ENCODE measurements at regions of chr16 and their contacts with region 1.

Region 1: GRCh38 chr16:22190776-22191531 is 15.1 kb upstream of the EEF2K start:
- DNase-seq: peak; percentile 93
- ATAC-seq: peak; percentile 60
- H3K4me3 Mint-ChIP-seq: peak overlapping the region; percentile 98
- H3K27ac Mint-ChIP-seq: peak overlapping the region; percentile 100
- H3K4me1 Mint-ChIP-seq: peaks cover 50% of the 10 kb centered on the region
- H3K27me3 Mint-ChIP-seq: peaks cover 2% of the 10 kb centered on the region

Region 2: GRCh38 chr16:21952793-21953540 is 238.0 kb before region 1 on chr16 and contains the start of gene UQCRC2:
- POLR2A ChIA-PET with region 1: interaction called, 14 read pairs
- DNase-seq: peak; percentile 83
- ATAC-seq: peak; percentile 92
- H3K4me3 Mint-ChIP-seq: peak within 1 kb of the TSS; percentile 96
- H3K27ac Mint-ChIP-seq: peak within 1 kb of the TSS; percentile 92
- H3K4me1 Mint-ChIP-seq: peaks cover 35% of the 10 kb centered on the region
- H3K27me3 Mint-ChIP-seq: no peaks in the 10 kb centered on the region
- total RNA-seq, gene UQCRC2: 216 to 221 TPM

Region 3: DNA sequence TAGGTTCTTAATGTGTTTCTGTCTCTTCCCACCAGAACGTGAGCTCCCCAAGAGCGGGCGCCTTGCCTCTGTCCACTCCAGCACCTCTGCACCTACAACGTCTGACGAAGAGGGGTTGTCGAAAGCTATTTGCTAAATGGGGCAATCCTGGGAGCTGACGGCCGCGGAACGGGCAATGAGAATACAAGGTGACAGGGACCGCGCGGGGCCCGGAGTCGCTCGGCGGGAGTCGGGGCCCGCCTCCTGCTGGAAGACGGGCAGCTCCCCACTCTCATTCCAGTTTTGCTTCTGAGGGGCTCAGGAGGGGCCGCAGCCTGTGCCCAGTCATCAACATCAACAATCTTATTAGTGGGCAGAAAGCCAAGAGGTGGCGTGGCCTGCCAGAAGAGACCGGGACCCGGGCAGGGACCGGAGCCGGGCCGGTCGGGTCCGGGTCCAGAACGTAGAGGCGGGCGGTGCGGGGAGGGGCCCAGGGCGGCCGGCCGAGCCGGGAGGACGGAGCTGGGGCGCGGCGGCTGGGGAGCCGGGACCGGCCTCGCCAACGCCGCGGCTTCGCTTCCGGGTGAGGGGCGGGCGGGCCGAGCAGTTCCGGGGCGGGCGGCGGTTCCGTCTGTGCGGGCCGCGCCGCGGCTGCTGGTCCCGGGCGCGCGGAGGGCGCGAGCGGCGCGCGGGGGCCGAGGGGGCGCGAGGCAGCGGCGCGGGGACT is 183.3 kb before region 1 on chr16 and contains the start of gene MOSMO:
- POLR2A ChIA-PET with region 1: interaction called, 10 read pairs
- DNase-seq: peak; percentile 80
- ATAC-seq: peak; percentile 92
- H3K4me3 Mint-ChIP-seq: peak within 1 kb of the TSS; percentile 88
- H3K27ac Mint-ChIP-seq: peak within 1 kb of the TSS; percentile 88
- H3K4me1 Mint-ChIP-seq: peaks cover 21% of the 10 kb centered on the region
- H3K27me3 Mint-ChIP-seq: no peaks in the 10 kb centered on the region
- total RNA-seq, gene MOSMO: 11.6 to 14.7 TPM

Region 4: DNA sequence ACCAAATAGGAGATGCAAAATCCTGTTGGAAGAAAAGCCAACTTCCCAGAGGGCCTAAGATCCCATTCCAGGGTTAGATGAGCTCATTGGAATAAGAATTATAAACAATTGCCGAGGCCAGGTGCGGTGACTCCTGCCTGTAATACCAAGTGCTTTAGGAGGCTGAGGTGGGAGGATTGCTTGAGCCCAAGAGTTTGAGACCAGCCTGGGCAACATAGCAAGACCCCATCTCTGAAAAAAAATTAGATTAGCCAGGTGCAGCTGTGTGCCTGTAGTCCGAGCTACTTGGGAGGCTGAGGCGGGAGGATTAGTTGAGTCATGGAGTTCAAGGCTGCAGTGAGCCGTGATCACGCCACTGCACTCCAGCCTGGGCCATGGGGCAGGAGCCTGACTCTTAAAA is 46.4 kb before region 1 on chr16:
- POLR2A ChIA-PET with region 1: no interaction called
- DNase-seq: no peak
- ATAC-seq: no peak
- H3K4me3 Mint-ChIP-seq: no peak overlapping the region
- H3K27ac Mint-ChIP-seq: no peak overlapping the region
- H3K4me1 Mint-ChIP-seq: no peaks in the 10 kb centered on the region
- H3K27me3 Mint-ChIP-seq: peaks cover 6% of the 10 kb centered on the region

Region 5: GRCh38 chr16:22206013-22206841 is 15.3 kb after region 1 on chr16 and contains the start of gene EEF2K:
- POLR2A ChIA-PET with region 1: interaction called, 15 read pairs
- DNase-seq: peak; percentile 87
- ATAC-seq: peak; percentile 92
- H3K4me3 Mint-ChIP-seq: peak within 1 kb of the TSS; percentile 98
- H3K27ac Mint-ChIP-seq: peak within 1 kb of the TSS; percentile 84
- H3K4me1 Mint-ChIP-seq: peaks cover 31% of the 10 kb centered on the region
- H3K27me3 Mint-ChIP-seq: no peaks in the 10 kb centered on the region
- total RNA-seq, gene EEF2K: 25.7 to 26.1 TPM

Region 6: GRCh38 chr16:22217889-22218730 is 27.2 kb after region 1 on chr16:
- POLR2A ChIA-PET with region 1: no interaction called
- DNase-seq: no peak
- ATAC-seq: peak; percentile 30
- H3K4me3 Mint-ChIP-seq: no peak overlapping the region
- H3K27ac Mint-ChIP-seq: no peak overlapping the region
- H3K4me1 Mint-ChIP-seq: peaks cover 16% of the 10 kb centered on the region
- H3K27me3 Mint-ChIP-seq: peaks cover 1% of the 10 kb centered on the region

Region 7: GRCh38 chr16:22232277-22233042 is 41.5 kb after region 1 on chr16:
- POLR2A ChIA-PET with region 1: no interaction called
- DNase-seq: no peak
- ATAC-seq: peak; percentile 52
- H3K4me3 Mint-ChIP-seq: no peak overlapping the region
- H3K27ac Mint-ChIP-seq: no peak overlapping the region
- H3K4me1 Mint-ChIP-seq: peaks cover 6% of the 10 kb centered on the region
- H3K27me3 Mint-ChIP-seq: no peaks in the 10 kb centered on the region

Region 8: GRCh38 chr16:22297114-22297878 is 106.3 kb after region 1 on chr16 and contains the start of gene POLR3E:
- POLR2A ChIA-PET with region 1: interaction called, 27 read pairs
- DNase-seq: peak; percentile 100
- ATAC-seq: peak; percentile 82
- H3K4me3 Mint-ChIP-seq: peak within 1 kb of the TSS; percentile 93
- H3K27ac Mint-ChIP-seq: peak within 1 kb of the TSS; percentile 95
- H3K4me1 Mint-ChIP-seq: peaks cover 32% of the 10 kb centered on the region
- H3K27me3 Mint-ChIP-seq: peaks cover 2% of the 10 kb centered on the region
- total RNA-seq, gene POLR3E: 53.2 to 56.9 TPM